Posterior cingulate gyrus (tissue), 11 donors: ENCODE measurements at regions of chr10 and their contacts with region 1.

Region 1: GRCh38 chr10:6202684-6203330 is at the start of gene PFKFB3:
- DNase-seq: peak; percentile 95 to 100 (median 96)

Region 2: GRCh38 chr10:6108603-6109443 is 94.0 kb before region 1 on chr10:
- intact Hi-C with region 1: loop called (anchors 5 kb)
- DNase-seq: no peak

Region 3: GRCh38 chr10:6144406-6145165 is 58.2 kb before region 1 on chr10:
- intact Hi-C with region 1: loop called (anchors 5 kb)
- DNase-seq: peak; percentile 72 to 98 (median 88)

Region 4: DNA sequence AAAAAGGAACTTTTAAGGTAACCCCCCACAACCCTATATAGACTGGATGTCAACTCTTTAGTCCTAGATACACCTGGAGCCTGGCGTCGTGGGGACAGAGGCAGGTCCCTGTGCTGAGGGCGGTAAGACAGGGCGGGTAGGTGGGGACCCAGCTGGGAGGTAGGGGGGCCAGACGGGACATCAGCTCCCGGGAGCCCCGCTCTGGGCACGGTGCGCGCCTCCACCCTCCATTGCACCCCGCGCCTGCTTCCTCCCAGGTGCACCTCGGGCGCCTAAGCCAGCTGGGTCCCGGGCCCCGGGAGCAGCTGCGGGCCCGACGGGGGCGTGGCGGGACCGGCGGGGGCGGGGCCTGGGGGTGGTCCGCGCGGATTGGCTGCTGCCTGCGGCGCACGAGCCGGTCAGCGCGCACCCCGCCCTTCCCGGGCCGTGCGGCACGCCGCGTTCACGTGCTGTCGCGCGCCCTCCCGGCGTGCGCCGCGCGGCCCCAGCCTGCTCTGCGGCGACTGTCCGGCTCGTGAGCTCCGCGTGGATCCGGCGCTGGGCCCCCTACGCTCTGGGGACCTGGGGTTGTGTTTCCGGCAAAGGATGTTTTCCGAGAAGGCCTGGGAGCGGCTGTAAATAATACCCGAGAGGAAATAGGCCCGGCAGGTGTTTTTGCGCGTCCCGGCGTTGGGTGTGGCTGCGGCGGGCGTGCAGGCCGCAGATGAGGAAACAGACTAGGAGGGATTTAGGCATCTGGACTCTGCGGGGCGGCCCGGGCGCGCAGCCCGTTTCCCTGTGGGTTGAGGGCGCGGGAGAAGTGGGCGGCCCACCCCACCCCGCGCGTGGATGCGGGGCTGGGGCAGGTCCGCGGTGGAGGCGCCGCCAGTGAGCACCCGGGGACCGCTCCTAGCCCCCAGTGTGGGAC is 39.2 kb before region 1 on chr10:
- intact Hi-C with region 1: loop called (anchors 1 kb)
- DNase-seq: peak; percentile 65 to 98 (median 84)